ENCODE measurements at regions of chr2 and their contacts with region 1.

Region 1: GRCh38 chr2:71545572-71546274 is 92.4 kb downstream of the DYSF start:
- DNase-seq: peak; percentile 55
- ATAC-seq: peak; percentile 79
- H3K4me3 ChIP-seq: no peak overlapping the region
- H3K27ac ChIP-seq: no peak overlapping the region
- H3K4me1 ChIP-seq: no peaks in the 10 kb centered on the region
- H3K27me3 ChIP-seq: peaks cover 24% of the 10 kb centered on the region
- CTCF ChIP-seq: peak; percentile 82
- POLR2A ChIP-seq: no peak
- RAD21 ChIP-seq: peak; percentile 83

Region 2: DNA sequence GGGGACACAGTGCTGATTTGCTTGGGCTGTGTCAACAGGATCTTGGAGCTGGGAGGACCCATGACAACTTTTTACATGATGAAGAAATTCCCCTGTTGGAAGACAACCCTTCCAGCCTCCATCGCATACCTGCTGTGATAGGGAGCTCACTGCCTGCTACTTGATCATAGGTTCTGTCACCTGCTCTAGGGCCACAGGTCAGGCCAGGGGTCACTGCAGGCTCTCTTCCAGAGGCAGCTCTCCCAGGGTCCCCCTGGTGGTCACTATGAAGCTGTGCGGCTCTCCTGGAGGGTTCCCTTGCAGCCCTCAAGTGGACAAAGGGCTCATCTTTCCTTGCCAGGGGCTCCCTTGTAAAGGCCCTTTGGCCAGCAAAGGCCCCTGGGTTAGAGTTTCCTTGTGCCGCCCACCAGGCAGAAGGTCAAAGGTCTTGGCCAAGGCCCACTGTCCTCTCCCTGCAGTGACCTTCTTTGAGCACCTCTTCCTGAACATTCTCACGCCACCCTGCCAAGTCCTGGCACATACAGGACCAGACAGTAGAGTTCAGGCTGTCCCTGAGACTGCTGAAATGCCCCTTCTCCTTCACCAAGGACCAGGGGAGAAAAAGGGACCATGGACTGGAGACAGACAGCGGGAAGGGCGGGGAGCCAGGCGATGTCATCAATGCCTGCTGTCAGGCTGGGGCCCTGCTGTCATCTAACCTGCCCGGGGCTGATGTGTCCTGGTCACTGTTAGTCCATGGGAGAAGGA is 252.7 kb after region 1 on chr2:
- CTCF ChIA-PET with region 1: interaction called, 4 read pairs
- POLR2A ChIA-PET with region 1: no interaction called
- dilution Hi-C with region 1: no loop called
- in situ Hi-C with region 1: no loop called
- intact Hi-C with region 1: loop called (anchors 5 kb)
- DNase-seq: peak; percentile 10
- ATAC-seq: peak; percentile 62; the same call in 1 of the 2 replicates
- H3K4me3 ChIP-seq: no peak overlapping the region
- H3K27ac ChIP-seq: no peak overlapping the region
- H3K4me1 ChIP-seq: peaks cover 12% of the 10 kb centered on the region
- H3K27me3 ChIP-seq: peaks cover 10% of the 10 kb centered on the region
- CTCF ChIP-seq: peak; percentile 61
- POLR2A ChIP-seq: no peak
- RAD21 ChIP-seq: peak; percentile 47

Region 3: GRCh38 chr2:71995067-71995665 is 449.4 kb after region 1 on chr2:
- CTCF ChIA-PET with region 1: interaction called, 3 read pairs
- POLR2A ChIA-PET with region 1: no interaction called
- dilution Hi-C with region 1: no loop called
- in situ Hi-C with region 1: no loop called
- intact Hi-C with region 1: loop called (anchors 10 kb)
- DNase-seq: peak; percentile 5
- ATAC-seq: no peak
- H3K4me3 ChIP-seq: no peak overlapping the region
- H3K27ac ChIP-seq: no peak overlapping the region
- H3K4me1 ChIP-seq: no peaks in the 10 kb centered on the region
- H3K27me3 ChIP-seq: peaks cover 2% of the 10 kb centered on the region
- CTCF ChIP-seq: peak; percentile 45
- POLR2A ChIP-seq: no peak
- RAD21 ChIP-seq: 0 out of 2 replicates have a peak, but pooled peaks have one; percentile 4

Region 4: DNA sequence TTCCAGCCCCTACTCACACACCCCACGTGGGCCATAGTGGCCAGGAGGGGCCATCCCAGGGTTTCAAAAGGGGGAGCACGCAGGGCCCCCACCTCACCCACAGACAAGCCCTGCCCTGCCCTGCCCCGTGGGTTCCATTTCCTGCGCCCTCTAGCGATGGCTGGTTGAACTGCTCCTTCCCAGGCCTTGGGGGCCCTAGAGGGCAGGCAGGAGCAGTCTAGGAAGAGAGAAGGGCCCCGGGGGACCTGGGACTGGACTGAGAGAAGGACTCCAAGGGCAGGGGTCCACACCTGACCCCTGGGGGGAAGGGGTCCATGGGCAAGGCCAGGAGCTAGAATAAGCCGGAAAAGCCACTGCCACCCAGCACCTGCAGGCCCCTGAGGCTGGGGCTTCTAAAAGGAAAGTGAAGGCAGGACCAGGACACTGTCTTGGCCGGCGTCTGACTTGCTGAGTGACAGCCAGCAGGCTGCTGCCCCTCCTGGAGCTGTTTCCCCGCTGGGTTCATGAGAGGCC is 591.8 kb after region 1 on chr2:
- CTCF ChIA-PET with region 1: no interaction called
- POLR2A ChIA-PET with region 1: no interaction called
- dilution Hi-C with region 1: no loop called
- in situ Hi-C with region 1: no loop called
- intact Hi-C with region 1: loop called (anchors 5 kb)
- DNase-seq: peak; percentile 18
- ATAC-seq: peak; percentile 95
- H3K4me3 ChIP-seq: no peak overlapping the region
- H3K27ac ChIP-seq: no peak overlapping the region
- H3K4me1 ChIP-seq: no peaks in the 10 kb centered on the region
- H3K27me3 ChIP-seq: peaks cover 29% of the 10 kb centered on the region
- CTCF ChIP-seq: peak; percentile 86
- POLR2A ChIP-seq: no peak
- RAD21 ChIP-seq: peak; percentile 57